Spleen (tissue), 13 donors: ENCODE measurements at regions of chr5 and their contacts with region 1.

Region 1: DNA sequence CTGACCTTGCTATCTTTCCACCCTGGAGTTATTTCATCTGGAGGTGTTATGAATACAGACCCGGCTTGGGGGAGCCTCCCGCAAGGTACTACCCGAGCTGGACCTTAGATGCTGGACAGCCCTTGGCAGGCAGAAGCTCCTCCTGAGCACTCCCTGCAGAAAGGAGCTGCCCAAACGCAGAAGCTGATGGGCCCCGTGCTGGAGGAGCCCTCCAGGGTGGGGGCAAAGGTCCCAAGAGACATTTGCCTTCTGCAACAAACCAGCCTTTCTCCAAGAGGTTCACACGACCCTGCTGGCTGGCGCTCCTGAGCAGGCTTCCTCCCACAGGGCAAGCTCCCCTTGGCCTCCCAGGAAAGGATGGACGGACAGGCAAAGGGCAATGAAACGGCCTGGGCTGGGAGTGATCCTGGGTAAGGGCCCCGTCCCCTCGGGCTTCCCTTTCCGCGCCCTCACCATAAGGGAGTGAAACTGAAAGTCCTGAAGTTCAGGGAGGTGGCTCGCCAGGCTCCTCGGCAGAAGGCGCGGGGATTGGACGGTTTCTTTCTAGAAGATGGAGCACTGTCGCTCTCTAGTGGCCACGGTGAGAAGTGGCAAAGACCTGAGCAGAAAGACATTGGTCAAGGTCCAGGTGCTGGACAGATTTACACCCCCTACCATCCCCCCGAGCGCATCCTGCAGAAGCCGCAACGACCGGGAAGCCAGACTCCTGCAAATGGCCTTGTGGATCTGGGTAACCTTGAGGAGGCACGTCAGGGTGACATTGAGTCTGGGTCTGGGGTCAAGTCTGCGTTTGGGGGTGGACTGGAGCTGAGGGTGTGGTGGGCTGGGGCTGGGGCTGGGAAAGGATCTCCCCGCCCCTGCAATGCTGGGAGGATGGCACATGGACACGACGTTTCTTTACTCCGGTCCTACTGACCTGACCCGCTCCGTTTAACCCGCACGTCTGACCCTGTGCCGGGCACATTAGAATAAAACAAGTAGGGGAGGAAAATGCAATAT is 56.4 kb downstream of the NEURL1B start:
- DNase-seq: peak; percentile 93
- H3K4me3 ChIP-seq: peak overlapping the region; percentile 43 to 71 (median 46)
- H3K27ac ChIP-seq: peak overlapping the region; percentile 15 to 82 (median 65)
- H3K4me1 ChIP-seq: peaks cover 4 to 41% (median 23%) of the 10 kb centered on the region in 6 donors
- H3K27me3 ChIP-seq: peaks cover 0 to 25% (median 6%) of the 10 kb centered on the region in 7 donors
- CTCF ChIP-seq: peak; percentile 84 to 96 (median 91)
- POLR2A ChIP-seq: no peak

Region 2: GRCh38 chr5:172380987-172381643 is 316.3 kb before region 1 on chr5:
- intact Hi-C with region 1: no loop called
- DNase-seq: no peak
- H3K4me3 ChIP-seq: no peak overlapping the region
- H3K27ac ChIP-seq: peak overlapping the region in 3 of 8 donors; percentile 47 to 64 (median 54)
- H3K4me1 ChIP-seq: peaks cover 0 to 19% (median 0%) of the 10 kb centered on the region in 6 donors
- H3K27me3 ChIP-seq: no peaks in the 10 kb centered on the region
- CTCF ChIP-seq: no peak
- POLR2A ChIP-seq: no peak

Region 3: GRCh38 chr5:172463031-172463430 is 234.4 kb before region 1 on chr5:
- intact Hi-C with region 1: loop called (anchors 5 kb)
- DNase-seq: no peak
- H3K4me3 ChIP-seq: no peak overlapping the region
- H3K27ac ChIP-seq: no peak overlapping the region
- H3K4me1 ChIP-seq: peaks cover 0 to 21% (median 2%) of the 10 kb centered on the region in 6 donors
- H3K27me3 ChIP-seq: peaks cover 0 to 21% (median 0%) of the 10 kb centered on the region in 7 donors
- CTCF ChIP-seq: no peak
- POLR2A ChIP-seq: no peak

Region 4: DNA sequence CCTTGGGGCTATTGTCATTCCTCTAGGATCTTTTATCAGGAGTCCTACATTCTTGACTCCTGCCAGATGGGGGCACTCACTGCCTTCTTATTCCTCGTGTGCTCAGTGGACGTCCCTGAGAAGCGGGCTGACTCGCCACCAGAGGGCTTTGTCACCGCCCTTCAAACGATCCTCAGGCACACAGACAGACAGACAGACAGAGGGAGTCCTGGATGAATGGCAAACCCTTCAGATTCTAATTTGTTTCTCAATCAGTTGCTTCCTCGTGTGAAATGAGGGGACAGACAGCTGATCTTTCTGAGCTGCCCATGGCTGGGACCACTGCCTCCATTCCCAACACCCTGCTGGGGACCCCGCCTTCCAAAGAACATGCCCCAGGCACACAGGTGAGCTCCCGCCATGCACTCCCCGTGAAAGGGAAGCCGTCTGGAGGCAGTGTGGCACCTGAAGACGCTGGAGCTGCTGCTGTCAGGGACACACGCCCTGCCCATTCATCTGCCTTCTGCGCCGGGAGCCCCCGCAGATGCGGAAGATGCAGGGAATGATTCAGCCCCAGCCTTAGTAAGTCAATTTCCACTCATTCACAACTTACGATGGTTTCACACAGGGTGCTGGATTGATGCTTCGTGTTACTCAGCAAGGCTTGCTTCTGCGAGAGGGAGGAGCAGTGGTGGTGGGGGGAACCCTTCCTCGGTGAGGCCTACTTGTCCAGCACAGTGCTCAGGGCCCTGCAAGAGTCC is 218.2 kb before region 1 on chr5:
- intact Hi-C with region 1: loop called (anchors 2 kb)
- DNase-seq: peak; percentile 84
- H3K4me3 ChIP-seq: no peak overlapping the region
- H3K27ac ChIP-seq: no peak overlapping the region
- H3K4me1 ChIP-seq: peaks cover 0 to 4% (median 0%) of the 10 kb centered on the region in 6 donors
- H3K27me3 ChIP-seq: no peaks in the 10 kb centered on the region
- CTCF ChIP-seq: peak; percentile 57 to 96 (median 80)
- POLR2A ChIP-seq: no peak

Region 5: GRCh38 chr5:172764849-172765765 is 67.7 kb after region 1 on chr5:
- intact Hi-C with region 1: no loop called
- DNase-seq: peak; percentile 98
- H3K4me3 ChIP-seq: peak overlapping the region; percentile 18 to 87 (median 37)
- H3K27ac ChIP-seq: peak overlapping the region; percentile 67 to 100 (median 100)
- H3K4me1 ChIP-seq: peaks cover 17 to 70% (median 54%) of the 10 kb centered on the region in 6 donors
- H3K27me3 ChIP-seq: no peaks in the 10 kb centered on the region
- CTCF ChIP-seq: peak in 1 of 11 experiments; percentile 23
- POLR2A ChIP-seq: peak in 1 of 3 donors; percentile 27

Region 6: GRCh38 chr5:172902497-172903200 is 205.2 kb after region 1 on chr5:
- intact Hi-C with region 1: no loop called
- DNase-seq: no peak
- H3K4me3 ChIP-seq: no peak overlapping the region
- H3K27ac ChIP-seq: peak overlapping the region in 7 of 8 donors; percentile 4 to 81 (median 70)
- H3K4me1 ChIP-seq: peaks cover under 1 to 51% (median 26%) of the 10 kb centered on the region in 6 donors
- H3K27me3 ChIP-seq: no peaks in the 10 kb centered on the region
- CTCF ChIP-seq: peak in 10 of 11 experiments; percentile 18 to 57 (median 50)
- POLR2A ChIP-seq: no peak